ENCODE measurements at regions of chr10 and their contacts with region 1.

Region 1: DNA sequence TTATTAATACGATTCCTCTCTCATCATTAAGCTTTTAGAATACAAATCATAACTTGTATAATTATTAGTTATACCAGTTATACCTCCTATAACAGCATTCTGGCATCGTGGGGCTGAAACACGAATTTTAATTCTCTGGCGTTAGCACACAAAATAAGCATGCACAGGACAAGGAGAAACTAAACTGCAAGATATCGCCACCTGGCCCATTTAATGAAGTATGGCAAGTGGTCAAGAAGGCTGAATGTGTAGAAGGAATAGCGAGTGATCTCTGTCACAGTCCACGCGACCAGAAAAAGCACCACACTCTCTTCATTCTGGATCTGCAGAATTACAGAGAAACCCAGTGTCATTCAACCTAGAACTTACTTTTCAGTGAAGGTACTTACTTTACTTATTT is 18.1 kb downstream of the HACD1 start:
- DNase-seq: no peak
- ATAC-seq: peak; percentile 57
- H3K4me3 ChIP-seq: no peak overlapping the region
- H3K4me3 Mint-ChIP-seq: no peak overlapping the region
- H3K27ac ChIP-seq: no peak overlapping the region
- H3K27ac Mint-ChIP-seq: no peak overlapping the region
- H3K4me1 ChIP-seq: no peaks in the 10 kb centered on the region
- H3K4me1 Mint-ChIP-seq: peaks cover 0 to 2% (median 0%) of the 10 kb centered on the region in 7 donors
- H3K27me3 ChIP-seq: no peaks in the 10 kb centered on the region
- H3K27me3 Mint-ChIP-seq: peaks cover 0 to 6% (median 0%) of the 10 kb centered on the region in 5 donors

Region 2: DNA sequence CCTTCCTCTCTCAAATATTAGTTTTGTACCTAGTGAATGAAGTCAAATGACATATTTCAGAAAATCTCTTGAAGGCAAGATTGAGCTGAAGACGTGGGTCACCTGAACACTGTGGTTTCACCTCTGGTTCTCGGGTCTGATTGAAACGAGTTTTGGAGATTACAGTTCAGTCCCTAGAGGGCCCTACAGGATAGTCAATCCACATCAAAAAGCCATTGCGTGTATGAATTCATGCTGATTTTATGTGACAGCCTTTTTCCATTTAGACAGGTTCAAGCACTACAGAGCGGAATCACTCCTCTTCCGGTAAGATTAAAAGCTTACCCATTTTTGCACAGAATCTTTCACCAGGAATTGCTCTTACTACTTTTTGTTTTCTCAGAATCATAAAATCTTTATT is 308.9 kb before region 1 on chr10:
- CTCF ChIA-PET with region 1: no interaction called
- POLR2A ChIA-PET with region 1: no interaction called
- intact Hi-C with region 1: loop called in 1 of 2 experiments (anchors 2 kb)
- DNase-seq: peak in 6 of 9 donors; percentile 18 to 46 (median 30)
- ATAC-seq: peak; percentile 34
- H3K4me3 ChIP-seq: no peak overlapping the region
- H3K4me3 Mint-ChIP-seq: no peak overlapping the region
- H3K27ac ChIP-seq: no peak overlapping the region
- H3K27ac Mint-ChIP-seq: no peak overlapping the region
- H3K4me1 ChIP-seq: no peaks in the 10 kb centered on the region
- H3K4me1 Mint-ChIP-seq: peaks cover 0 to 8% (median 4%) of the 10 kb centered on the region in 7 donors
- H3K27me3 ChIP-seq: no peaks in the 10 kb centered on the region
- H3K27me3 Mint-ChIP-seq: peaks cover 0 to 24% (median 18%) of the 10 kb centered on the region in 5 donors

Region 3: GRCh38 chr10:17617031-17617911 is 18.2 kb after region 1 on chr10 and contains the start of gene HACD1:
- CTCF ChIA-PET with region 1: no interaction called
- POLR2A ChIA-PET with region 1: no interaction called
- intact Hi-C with region 1: no loop called
- DNase-seq: peak; percentile 15 to 63 (median 33)
- ATAC-seq: peak; percentile 74
- H3K4me3 ChIP-seq: peak within 1 kb of the TSS; percentile 80
- H3K4me3 Mint-ChIP-seq: peak within 1 kb of the TSS; percentile 86 to 93 (median 90)
- H3K27ac ChIP-seq: no peak within 1 kb of the TSS
- H3K27ac Mint-ChIP-seq: peak within 1 kb of the TSS in 3 of 9 donors; percentile 29 to 68 (median 52)
- H3K4me1 ChIP-seq: peaks cover 0 to 3% of the 10 kb centered on the region in 2 donors
- H3K4me1 Mint-ChIP-seq: peaks cover 0 to 16% (median 6%) of the 10 kb centered on the region in 7 donors
- H3K27me3 ChIP-seq: no peaks in the 10 kb centered on the region
- H3K27me3 Mint-ChIP-seq: peaks cover 13 to 39% (median 21%) of the 10 kb centered on the region in 5 donors
- total RNA-seq, gene HACD1: 0.24 to 1.6 (median 0.80) TPM in 3 of 5 experiments, not detected in the others

Measured in naive thymus-derived CD4-positive, alpha-beta T cell (primary cell).